Activated CD4-positive, alpha-beta memory T cell treated with anti-CD3 and anti-CD28 coated beads for 36 hours (primary cell): ENCODE measurements at regions of chr17 and their contacts with region 1.

Region 1: GRCh38 chr17:63848834-63849700 is 6.6 kb upstream of the SMARCD2 start:
- DNase-seq: peak; percentile 98
- H3K4me3 Mint-ChIP-seq: peak overlapping the region; percentile 59
- H3K27ac Mint-ChIP-seq: peak overlapping the region; percentile 80
- H3K4me1 Mint-ChIP-seq: peaks cover 18% of the 10 kb centered on the region
- H3K27me3 Mint-ChIP-seq: no peaks in the 10 kb centered on the region

Region 2: GRCh38 chr17:63859257-63859656 is 10.2 kb after region 1 on chr17:
- CTCF ChIA-PET with region 1: interaction called, 42 read pairs
- POLR2A ChIA-PET with region 1: interaction called, 3 read pairs
- intact Hi-C with region 1: no loop called
- DNase-seq: no peak
- H3K4me3 Mint-ChIP-seq: no peak overlapping the region
- H3K27ac Mint-ChIP-seq: no peak overlapping the region
- H3K4me1 Mint-ChIP-seq: no peaks in the 10 kb centered on the region
- H3K27me3 Mint-ChIP-seq: peaks cover 5% of the 10 kb centered on the region